ENCODE measurements at regions of chr12 and their contacts with region 1.

Region 1: DNA sequence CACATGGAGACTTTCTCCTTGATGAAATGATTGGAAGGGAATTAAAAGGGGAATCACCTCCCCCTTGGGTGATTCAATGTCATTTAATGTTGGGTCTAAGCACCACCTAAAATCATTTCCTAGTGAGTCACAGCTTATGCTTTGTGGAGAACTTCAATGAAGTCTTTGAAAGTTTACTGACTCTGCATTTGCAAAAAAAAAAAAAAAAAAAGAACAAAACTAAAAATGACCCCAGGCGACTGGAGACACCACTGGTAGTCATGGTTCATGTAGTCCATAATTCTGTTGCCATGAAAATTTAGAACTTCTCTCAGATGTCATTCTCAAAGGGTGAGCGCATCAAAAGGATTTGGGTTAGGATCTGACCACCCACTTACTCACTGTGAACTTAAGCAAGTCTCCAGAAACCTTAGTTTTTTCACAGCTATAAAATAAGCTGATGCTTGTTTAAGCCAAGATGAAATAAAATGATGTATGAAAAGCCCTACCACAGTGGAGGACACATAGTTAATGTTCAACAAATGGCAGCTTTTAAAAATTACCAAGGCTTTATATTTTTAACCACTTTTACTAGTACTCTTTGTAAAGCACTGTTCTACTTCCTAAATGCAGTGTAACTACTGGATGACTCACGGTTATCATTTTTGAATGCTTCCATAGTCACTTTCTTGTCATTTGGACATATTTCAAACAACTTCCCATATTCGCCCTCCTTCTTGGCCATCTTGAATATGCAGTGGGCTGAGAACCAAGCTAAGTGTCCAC is 18.1 kb upstream of the KSR2 start:
- DNase-seq: peak; percentile 97
- ATAC-seq: peak; percentile 78
- H3K4me3 ChIP-seq: peak overlapping the region in 1 of 2 experiments; percentile 27; a peak in 2 of 4 replicates
- H3K27ac ChIP-seq: peak overlapping the region; percentile 98
- H3K4me1 ChIP-seq: peaks cover 43 to 71% of the 10 kb centered on the region in 2 experiments
- H3K27me3 ChIP-seq: no peaks in the 10 kb centered on the region
- CTCF ChIP-seq: no peak
- POLR2A ChIP-seq: no peak
- RAD21 ChIP-seq: 0 out of 2 replicates have a peak, but pooled peaks have one; percentile 1

Region 2: GRCh38 chr12:117968826-117969659 is 17.8 kb before region 1 on chr12 and contains the start of gene KSR2:
- CTCF ChIA-PET with region 1: no interaction called
- POLR2A ChIA-PET with region 1: interaction called, 11 read pairs
- RAD21 ChIA-PET with region 1: no interaction called
- intact Hi-C with region 1: no loop called
- DNase-seq: peak; percentile 81
- ATAC-seq: peak; percentile 91
- H3K4me3 ChIP-seq: peak within 1 kb of the TSS; percentile 87 to 89
- H3K27ac ChIP-seq: peak within 1 kb of the TSS; percentile 80
- H3K4me1 ChIP-seq: peaks cover 11 to 28% of the 10 kb centered on the region in 2 experiments
- H3K27me3 ChIP-seq: no peaks in the 10 kb centered on the region
- CTCF ChIP-seq: no peak
- POLR2A ChIP-seq: peak; percentile 49
- RAD21 ChIP-seq: no peak; the same call in 1 of the 2 replicates
- total RNA-seq, gene KSR2: 10.1 TPM

Region 3: GRCh38 chr12:118016424-118017264 is 29.8 kb after region 1 on chr12 and contains the start of gene RFC5:
- CTCF ChIA-PET with region 1: no interaction called
- POLR2A ChIA-PET with region 1: interaction called, 4 read pairs
- RAD21 ChIA-PET with region 1: no interaction called
- intact Hi-C with region 1: loop called (anchors 2 kb)
- DNase-seq: peak; percentile 92
- ATAC-seq: peak; percentile 95
- H3K4me3 ChIP-seq: peak within 1 kb of the TSS; percentile 68 to 86
- H3K27ac ChIP-seq: peak within 1 kb of the TSS; percentile 75
- H3K4me1 ChIP-seq: peaks cover 11 to 24% of the 10 kb centered on the region in 2 experiments; a peak in 3 of 4 replicates
- H3K27me3 ChIP-seq: no peaks in the 10 kb centered on the region
- CTCF ChIP-seq: no peak
- POLR2A ChIP-seq: no peak
- RAD21 ChIP-seq: no peak
- total RNA-seq, gene RFC5: 78.6 TPM

Region 4: GRCh38 chr12:118052324-118053070 is 65.6 kb after region 1 on chr12:
- CTCF ChIA-PET with region 1: interaction called, 4 read pairs
- POLR2A ChIA-PET with region 1: no interaction called
- RAD21 ChIA-PET with region 1: no interaction called
- intact Hi-C with region 1: loop called (anchors 5 kb)
- DNase-seq: peak; percentile 97
- ATAC-seq: peak; percentile 87
- H3K4me3 ChIP-seq: peak overlapping the region; percentile 21 to 49
- H3K27ac ChIP-seq: peak overlapping the region; percentile 87
- H3K4me1 ChIP-seq: peaks cover 34 to 58% of the 10 kb centered on the region in 2 experiments
- H3K27me3 ChIP-seq: no peaks in the 10 kb centered on the region
- CTCF ChIP-seq: no peak
- POLR2A ChIP-seq: no peak
- RAD21 ChIP-seq: peak; percentile 24; the same call in 1 of the 2 replicates

Region 5: GRCh38 chr12:118337194-118337838 is 350.4 kb after region 1 on chr12:
- CTCF ChIA-PET with region 1: no interaction called
- POLR2A ChIA-PET with region 1: no interaction called
- RAD21 ChIA-PET with region 1: no interaction called
- intact Hi-C with region 1: no loop called
- DNase-seq: no peak
- ATAC-seq: no peak
- H3K4me3 ChIP-seq: no peak overlapping the region
- H3K27ac ChIP-seq: no peak overlapping the region
- H3K4me1 ChIP-seq: no peaks in the 10 kb centered on the region
- H3K27me3 ChIP-seq: no peaks in the 10 kb centered on the region
- CTCF ChIP-seq: no peak
- POLR2A ChIP-seq: no peak
- RAD21 ChIP-seq: no peak